ENCODE measurements at regions of chrX and their contacts with region 1.

Region 1: DNA sequence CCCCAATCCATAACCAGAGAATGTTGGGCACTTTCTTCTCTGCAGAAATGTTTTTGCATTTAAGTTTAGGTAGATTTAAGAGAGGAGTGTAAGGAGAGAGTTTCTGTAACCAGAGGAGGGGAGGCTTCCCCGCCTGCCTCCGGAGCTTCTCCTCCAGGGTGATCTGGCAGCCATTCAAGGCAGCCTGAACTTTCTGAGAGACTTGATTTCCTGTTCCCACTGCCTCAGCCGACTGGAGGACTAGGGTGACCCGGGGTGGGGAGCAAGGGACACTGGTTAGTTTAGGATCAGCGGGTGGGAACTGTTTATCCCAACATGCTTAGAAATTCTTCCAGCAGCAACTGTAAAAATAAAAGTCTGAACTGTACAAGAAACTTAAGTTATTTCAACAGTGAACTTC is 15.1 kb downstream of the FAM9C start:
- DNase-seq: peak; percentile 74 to 81
- H3K4me3 ChIP-seq: peak overlapping the region; percentile 37; the same call in 1 of the 2 replicates
- H3K27ac ChIP-seq: peak overlapping the region; percentile 99
- H3K4me1 ChIP-seq: peaks cover 56% of the 10 kb centered on the region
- H3K27me3 ChIP-seq: no peaks in the 10 kb centered on the region
- CTCF ChIP-seq: no peak

Region 2: GRCh38 chrX:12946838-12947544 is 82.3 kb before region 1 on chrX:
- CTCF ChIA-PET with region 1: no interaction called
- POLR2A ChIA-PET with region 1: interaction called, 16 read pairs
- intact Hi-C with region 1: loop called (anchors 1 kb)
- DNase-seq: peak; percentile 87 to 94
- H3K4me3 ChIP-seq: peak overlapping the region; percentile 40; the same call in 1 of the 2 replicates
- H3K27ac ChIP-seq: peak overlapping the region; percentile 98
- H3K4me1 ChIP-seq: peaks cover 35% of the 10 kb centered on the region
- H3K27me3 ChIP-seq: no peaks in the 10 kb centered on the region
- CTCF ChIP-seq: peak; percentile 93

Region 3: DNA sequence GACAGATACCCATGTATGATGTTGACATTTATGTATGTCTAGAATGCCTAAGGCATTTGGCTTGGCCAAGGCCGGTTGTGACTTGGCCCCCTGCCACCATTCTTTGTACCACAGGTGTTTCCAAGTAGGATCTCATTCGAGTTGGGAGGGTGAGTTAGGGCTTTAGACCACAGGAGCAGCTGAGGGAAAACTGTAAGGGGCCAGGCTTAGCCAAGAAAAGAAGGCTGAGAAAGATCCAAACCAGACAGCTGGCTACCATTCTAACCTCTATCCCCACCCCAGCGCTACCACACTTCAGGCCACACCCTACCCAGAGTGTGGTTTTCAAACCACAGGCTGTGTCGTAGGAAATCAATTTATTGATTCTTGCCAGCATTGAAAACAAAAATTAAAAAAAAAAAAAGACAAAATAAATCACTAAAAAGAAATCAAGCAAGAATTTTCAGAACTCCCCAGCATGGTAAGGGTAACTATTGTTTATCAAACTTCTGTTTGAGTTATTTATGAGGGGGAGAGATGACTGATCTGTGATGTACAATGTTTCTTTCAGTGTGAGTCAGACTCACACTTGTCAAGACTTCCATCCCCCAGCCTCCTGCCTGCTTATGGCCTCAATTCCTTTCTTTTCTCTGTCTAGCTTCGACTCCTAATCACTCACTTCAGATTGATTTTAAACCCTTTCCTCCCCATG is 44.6 kb before region 1 on chrX:
- CTCF ChIA-PET with region 1: no interaction called
- POLR2A ChIA-PET with region 1: no interaction called
- intact Hi-C with region 1: loop called (anchors 1 kb)
- DNase-seq: peak; percentile 85 to 88
- H3K4me3 ChIP-seq: peak overlapping the region; percentile 23; the same call in 1 of the 2 replicates
- H3K27ac ChIP-seq: peak overlapping the region; percentile 91
- H3K4me1 ChIP-seq: peaks cover 56% of the 10 kb centered on the region
- H3K27me3 ChIP-seq: no peaks in the 10 kb centered on the region
- CTCF ChIP-seq: no peak

Region 4: GRCh38 chrX:13015536-13016236 is 13.7 kb before region 1 on chrX:
- CTCF ChIA-PET with region 1: no interaction called
- POLR2A ChIA-PET with region 1: no interaction called
- intact Hi-C with region 1: no loop called
- DNase-seq: peak in 1 of 2 experiments; percentile 46
- H3K4me3 ChIP-seq: no peak overlapping the region
- H3K27ac ChIP-seq: no peak overlapping the region
- H3K4me1 ChIP-seq: peaks cover 13% of the 10 kb centered on the region
- H3K27me3 ChIP-seq: no peaks in the 10 kb centered on the region
- CTCF ChIP-seq: no peak

Region 5: GRCh38 chrX:13059637-13060499 is 30.5 kb after region 1 on chrX:
- CTCF ChIA-PET with region 1: no interaction called
- POLR2A ChIA-PET with region 1: no interaction called
- intact Hi-C with region 1: loop called (anchors 2 kb)
- DNase-seq: peak; percentile 43 to 84
- H3K4me3 ChIP-seq: no peak overlapping the region
- H3K27ac ChIP-seq: peak overlapping the region; percentile 80
- H3K4me1 ChIP-seq: peaks cover 29% of the 10 kb centered on the region
- H3K27me3 ChIP-seq: no peaks in the 10 kb centered on the region
- CTCF ChIP-seq: no peak

Region 6: GRCh38 chrX:13194291-13195103 is 165.2 kb after region 1 on chrX:
- CTCF ChIA-PET with region 1: no interaction called
- POLR2A ChIA-PET with region 1: no interaction called
- intact Hi-C with region 1: loop called (anchors 1 kb)
- DNase-seq: peak in 1 of 2 experiments; percentile 90
- H3K4me3 ChIP-seq: peak overlapping the region; percentile 8; the same call in 1 of the 2 replicates
- H3K27ac ChIP-seq: peak overlapping the region; percentile 93
- H3K4me1 ChIP-seq: peaks cover 74% of the 10 kb centered on the region
- H3K27me3 ChIP-seq: no peaks in the 10 kb centered on the region
- CTCF ChIP-seq: no peak

Region 7: DNA sequence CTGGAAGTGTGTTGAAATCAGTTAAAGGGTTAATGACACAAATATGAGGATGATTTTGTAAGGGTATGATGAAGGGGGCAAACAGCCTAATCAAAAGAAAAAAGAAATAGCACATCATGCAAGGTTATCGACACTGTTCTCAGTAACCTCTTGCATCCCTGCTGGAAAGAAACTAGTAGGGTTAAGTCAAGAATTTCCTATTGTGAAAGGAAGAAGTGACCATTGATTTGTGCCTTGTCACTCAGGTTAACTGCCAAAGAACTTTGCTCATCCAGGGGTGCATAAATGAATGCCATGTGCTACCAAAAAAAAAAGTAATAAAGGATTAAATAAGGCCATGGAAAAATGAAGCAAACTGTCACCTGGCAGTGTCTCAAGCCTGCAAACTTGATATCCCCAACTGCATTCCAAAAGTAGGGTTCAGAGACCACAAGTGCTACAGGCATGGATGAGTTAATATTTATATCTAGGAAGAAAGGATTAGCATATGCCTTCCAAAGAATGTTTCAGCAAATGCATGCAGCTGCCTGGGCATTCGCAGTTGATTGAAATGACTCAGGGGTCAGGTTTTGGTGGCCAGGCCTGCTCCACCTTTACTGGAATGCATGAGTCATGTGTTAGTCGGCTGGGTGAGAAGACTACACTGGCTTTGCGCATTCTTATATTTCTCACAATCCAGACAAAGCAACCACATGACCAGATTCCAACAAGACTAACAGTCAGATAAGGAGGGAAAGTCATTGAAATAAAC is 368.9 kb after region 1 on chrX:
- CTCF ChIA-PET with region 1: no interaction called
- POLR2A ChIA-PET with region 1: no interaction called
- intact Hi-C with region 1: loop called (anchors 1 kb)
- DNase-seq: peak; percentile 84 to 98
- H3K4me3 ChIP-seq: no peak overlapping the region
- H3K27ac ChIP-seq: peak overlapping the region; percentile 99
- H3K4me1 ChIP-seq: peaks cover 39% of the 10 kb centered on the region
- H3K27me3 ChIP-seq: no peaks in the 10 kb centered on the region
- CTCF ChIP-seq: no peak

Measured in PC-9 (cell line).